Endothelial cell of umbilical vein (primary cell): ENCODE measurements at regions of chr20 and their contacts with region 1.

Region 1: DNA sequence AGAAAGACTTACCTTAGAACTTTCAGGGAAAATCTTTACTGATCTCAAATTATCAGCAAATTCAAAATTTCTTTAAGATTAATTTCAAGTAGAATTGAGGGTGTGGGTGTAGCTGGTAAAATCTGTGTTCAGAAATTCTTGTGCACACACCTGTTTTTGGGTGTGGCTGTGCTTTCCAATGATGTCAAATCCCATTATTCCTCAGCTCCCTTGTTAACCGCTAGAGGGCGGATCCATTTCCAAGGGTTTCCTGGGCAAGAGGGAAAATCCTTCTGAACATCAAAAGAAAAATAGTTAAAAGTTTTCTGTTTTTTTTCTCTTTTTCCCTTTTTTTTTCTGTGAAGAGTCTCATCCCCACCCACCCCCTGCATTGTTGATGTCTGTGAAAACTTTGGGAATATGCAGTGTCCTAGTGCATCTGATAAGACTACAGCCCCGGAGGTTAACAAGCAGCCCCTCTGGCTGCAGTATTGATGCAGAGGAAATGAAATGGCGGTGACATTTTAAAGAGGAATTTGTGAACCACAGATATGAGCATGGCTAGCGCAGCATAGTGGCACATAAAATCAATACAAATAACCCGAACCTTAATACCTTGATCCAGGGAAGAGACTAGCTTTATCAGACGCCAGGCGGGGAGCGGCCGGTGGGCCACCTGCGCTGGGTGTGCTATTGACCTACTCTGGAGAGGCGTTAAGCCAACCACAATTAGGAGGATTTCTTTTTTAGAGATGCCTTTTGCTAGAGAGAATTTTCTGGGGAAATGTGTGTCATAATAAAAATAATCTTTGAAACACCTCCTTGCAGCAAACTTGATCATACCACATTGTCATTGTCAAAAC is 130.9 kb downstream of the FOXA2 start:
- DNase-seq: peak; percentile 11
- H3K4me3 ChIP-seq: no peak overlapping the region
- H3K27ac ChIP-seq: no peak overlapping the region
- H3K4me1 ChIP-seq: no peaks in the 10 kb centered on the region
- H3K27me3 ChIP-seq: peaks cover 0 to 2% of the 10 kb centered on the region in 2 experiments
- CTCF ChIP-seq: peak; percentile 55 to 64
- POLR2A ChIP-seq: no peak

Region 2: GRCh38 chr20:22339091-22339881 is 114.2 kb before region 1 on chr20:
- CTCF ChIA-PET with region 1: interaction called, 5 read pairs
- POLR2A ChIA-PET with region 1: no interaction called
- dilution Hi-C with region 1: no loop called
- intact Hi-C with region 1: loop called (anchors 2 kb)
- DNase-seq: peak; percentile 64
- H3K4me3 ChIP-seq: no peak overlapping the region
- H3K27ac ChIP-seq: no peak overlapping the region
- H3K4me1 ChIP-seq: no peaks in the 10 kb centered on the region
- H3K27me3 ChIP-seq: peaks cover 5 to 10% of the 10 kb centered on the region in 2 experiments
- CTCF ChIP-seq: peak; percentile 60 to 61
- POLR2A ChIP-seq: no peak

Region 3: DNA sequence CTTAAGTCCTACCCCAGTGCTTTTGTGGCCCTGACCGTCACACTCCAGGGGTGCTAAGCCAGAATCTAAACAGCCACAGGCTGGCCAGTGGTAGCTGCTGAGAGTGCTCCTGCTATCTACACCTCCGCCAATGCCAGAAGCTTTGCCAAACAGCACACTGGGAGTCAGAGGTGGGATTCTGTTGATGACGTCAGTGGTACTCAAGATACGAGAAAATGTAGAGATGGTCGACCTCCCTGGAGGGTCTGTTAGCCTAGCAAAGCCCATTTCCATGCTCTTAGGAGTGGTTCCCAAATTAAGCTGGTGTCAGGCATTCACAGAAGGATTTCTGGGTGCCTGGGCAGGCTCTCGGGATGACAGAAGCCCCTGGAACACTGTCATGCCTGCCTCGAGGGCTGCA is 18.9 kb before region 1 on chr20:
- CTCF ChIA-PET with region 1: interaction called, 12 read pairs
- POLR2A ChIA-PET with region 1: no interaction called
- dilution Hi-C with region 1: no loop called
- intact Hi-C with region 1: no loop called
- DNase-seq: no peak
- H3K4me3 ChIP-seq: no peak overlapping the region
- H3K27ac ChIP-seq: no peak overlapping the region
- H3K4me1 ChIP-seq: no peaks in the 10 kb centered on the region
- H3K27me3 ChIP-seq: peaks cover 0 to 2% of the 10 kb centered on the region in 2 experiments
- CTCF ChIP-seq: no peak
- POLR2A ChIP-seq: no peak

Region 4: GRCh38 chr20:22442318-22442717 is 11.1 kb before region 1 on chr20:
- CTCF ChIA-PET with region 1: interaction called, 12 read pairs
- POLR2A ChIA-PET with region 1: no interaction called
- dilution Hi-C with region 1: no loop called
- intact Hi-C with region 1: no loop called
- DNase-seq: no peak
- H3K4me3 ChIP-seq: no peak overlapping the region
- H3K27ac ChIP-seq: no peak overlapping the region
- H3K4me1 ChIP-seq: no peaks in the 10 kb centered on the region
- H3K27me3 ChIP-seq: no peaks in the 10 kb centered on the region
- CTCF ChIP-seq: no peak
- POLR2A ChIP-seq: no peak

Region 5: GRCh38 chr20:22466447-22467171 is 13.1 kb after region 1 on chr20:
- CTCF ChIA-PET with region 1: interaction called, 18 read pairs
- POLR2A ChIA-PET with region 1: no interaction called
- dilution Hi-C with region 1: no loop called
- intact Hi-C with region 1: no loop called
- DNase-seq: no peak
- H3K4me3 ChIP-seq: no peak overlapping the region
- H3K27ac ChIP-seq: no peak overlapping the region
- H3K4me1 ChIP-seq: no peaks in the 10 kb centered on the region
- H3K27me3 ChIP-seq: no peaks in the 10 kb centered on the region
- CTCF ChIP-seq: no peak
- POLR2A ChIP-seq: no peak